MCF 10A (cell line): ENCODE measurements at regions of chr1 and their contacts with region 1.

Region 1: GRCh38 chr1:205812878-205813754 is at the start of gene SLC41A1:
- DNase-seq: peak; percentile 98
- H3K4me3 Mint-ChIP-seq: peak within 1 kb of the TSS; percentile 87
- H3K27ac Mint-ChIP-seq: peak within 1 kb of the TSS; percentile 40
- H3K4me1 Mint-ChIP-seq: peaks cover 42% of the 10 kb centered on the region
- H3K27me3 Mint-ChIP-seq: no peaks in the 10 kb centered on the region
- CTCF ChIP-seq: no peak
- total RNA-seq, gene SLC41A1: 48.8 and 49.7 TPM in 2 replicates

Region 2: DNA sequence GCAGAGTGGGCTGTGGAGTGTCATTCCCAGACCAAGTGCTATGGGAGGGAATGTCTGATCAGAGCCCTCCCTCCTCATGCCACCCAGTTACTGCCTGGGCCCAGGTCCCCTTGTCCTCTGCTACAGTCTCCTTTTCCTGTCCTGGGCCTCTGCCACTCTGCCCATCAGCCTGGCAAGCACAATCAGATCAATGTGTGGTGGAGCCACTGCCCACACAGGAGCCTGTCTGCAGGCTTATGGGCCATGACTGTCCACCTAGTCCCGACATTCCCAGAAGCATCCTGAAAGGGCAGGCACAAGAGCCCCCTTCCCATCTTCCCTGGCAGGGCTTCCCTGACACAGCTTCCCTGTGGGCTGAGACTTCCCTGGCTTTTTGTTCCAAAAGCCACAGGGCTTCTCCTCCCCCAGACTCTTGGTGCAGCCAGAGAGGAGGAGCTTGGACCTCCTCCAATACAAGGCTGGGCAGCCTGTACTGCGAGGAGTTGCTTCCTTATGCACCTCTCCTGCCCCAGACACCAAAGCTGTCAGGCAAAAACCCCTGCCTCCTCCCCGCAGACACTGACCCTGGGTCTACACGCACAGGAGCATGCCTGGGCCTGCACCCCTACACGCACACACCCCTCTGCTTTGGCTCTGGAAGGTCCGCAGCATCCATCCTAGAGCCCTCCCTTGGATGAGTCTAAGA is 799.3 kb before region 1 on chr1:
- CTCF ChIA-PET with region 1: no interaction called
- POLR2A ChIA-PET with region 1: no interaction called
- intact Hi-C with region 1: no loop called
- DNase-seq: peak; percentile 45
- H3K4me3 Mint-ChIP-seq: no peak overlapping the region
- H3K27ac Mint-ChIP-seq: no peak overlapping the region
- H3K4me1 Mint-ChIP-seq: peaks cover 6% of the 10 kb centered on the region
- H3K27me3 Mint-ChIP-seq: peaks cover 63% of the 10 kb centered on the region
- CTCF ChIP-seq: no peak

Region 3: GRCh38 chr1:205797168-205797567 is 15.9 kb before region 1 on chr1:
- CTCF ChIA-PET with region 1: interaction called, 54 read pairs
- POLR2A ChIA-PET with region 1: interaction called, 4 read pairs
- intact Hi-C with region 1: no loop called
- DNase-seq: no peak
- H3K4me3 Mint-ChIP-seq: no peak overlapping the region
- H3K27ac Mint-ChIP-seq: no peak overlapping the region
- H3K4me1 Mint-ChIP-seq: peaks cover 5% of the 10 kb centered on the region
- H3K27me3 Mint-ChIP-seq: no peaks in the 10 kb centered on the region
- CTCF ChIP-seq: no peak

Region 4: DNA sequence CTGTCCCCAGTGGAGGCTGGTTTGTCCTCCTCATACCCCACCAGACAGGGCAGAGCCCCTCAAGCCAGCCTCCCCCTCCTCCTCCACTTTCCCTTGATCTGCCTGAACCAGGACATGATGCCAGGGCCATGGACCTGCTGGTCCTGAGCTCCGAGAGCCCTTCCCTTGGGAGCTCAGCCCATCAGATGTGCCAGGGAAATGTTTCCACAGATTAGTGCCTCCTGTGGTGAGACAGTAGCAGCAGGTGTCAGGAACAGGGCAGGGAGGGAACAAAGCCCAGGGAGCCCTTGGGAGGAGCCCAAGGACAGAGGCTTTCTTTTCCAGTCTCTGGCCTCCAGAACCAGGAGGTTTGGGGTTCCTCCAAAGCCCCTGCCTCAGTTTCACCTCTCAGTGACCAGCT is 14.5 kb after region 1 on chr1:
- CTCF ChIA-PET with region 1: interaction called, 12 read pairs
- POLR2A ChIA-PET with region 1: interaction called, 9 read pairs
- intact Hi-C with region 1: no loop called
- DNase-seq: peak; percentile 36
- H3K4me3 Mint-ChIP-seq: no peak overlapping the region
- H3K27ac Mint-ChIP-seq: no peak overlapping the region
- H3K4me1 Mint-ChIP-seq: no peaks in the 10 kb centered on the region
- H3K27me3 Mint-ChIP-seq: peaks cover 31% of the 10 kb centered on the region
- CTCF ChIP-seq: no peak